ENCODE measurements at regions of chr21 and their contacts with region 1.

Region 1: DNA sequence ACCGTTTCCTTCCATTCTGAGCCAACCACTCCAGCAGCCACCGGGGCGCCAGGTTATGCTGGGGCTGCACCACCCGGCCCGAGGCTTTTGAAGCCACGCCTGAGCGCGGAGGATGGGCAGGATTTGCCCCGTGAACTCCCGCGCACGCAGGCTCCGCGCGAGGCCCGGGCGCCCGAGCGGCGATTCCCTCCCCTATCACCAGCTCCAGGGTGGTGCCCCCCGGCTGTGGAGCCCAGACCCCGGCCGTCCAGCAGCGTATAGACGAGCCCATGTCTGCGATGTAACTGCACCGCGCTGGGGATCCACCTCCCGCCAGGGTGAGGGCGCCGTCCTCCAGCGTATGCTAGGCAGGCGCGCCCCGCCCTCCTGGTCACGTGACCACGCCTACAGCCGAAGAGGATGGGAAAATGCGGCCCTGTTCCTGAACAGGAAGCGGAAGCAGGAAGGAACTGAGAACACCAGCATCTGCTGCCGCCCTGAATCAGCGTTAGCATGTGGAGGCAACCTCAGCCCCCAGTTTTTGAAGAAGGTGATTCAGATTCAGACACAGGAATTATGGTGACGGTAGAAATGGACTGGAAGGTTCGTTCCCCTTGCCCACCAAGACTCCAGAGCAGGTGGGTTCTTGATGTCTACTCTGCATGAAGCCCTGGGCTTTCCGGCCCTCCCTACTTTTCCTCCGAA is 46.0 kb downstream of the VPS26C start:
- DNase-seq: peak; percentile 98
- ATAC-seq: peak; percentile 82
- H3K4me3 Mint-ChIP-seq: peak overlapping the region; percentile 79
- H3K27ac Mint-ChIP-seq: peak overlapping the region; percentile 93
- H3K4me1 Mint-ChIP-seq: peaks cover 53% of the 10 kb centered on the region
- H3K27me3 Mint-ChIP-seq: no peaks in the 10 kb centered on the region
- CTCF ChIP-seq: no peak

Region 2: GRCh38 chr21:37164742-37165141 is 56.4 kb before region 1 on chr21:
- CTCF ChIA-PET with region 1: no interaction called
- POLR2A ChIA-PET with region 1: no interaction called
- intact Hi-C with region 1: no loop called
- DNase-seq: no peak
- ATAC-seq: no peak
- H3K4me3 Mint-ChIP-seq: no peak overlapping the region
- H3K27ac Mint-ChIP-seq: peak overlapping the region; percentile 42
- H3K4me1 Mint-ChIP-seq: no peaks in the 10 kb centered on the region
- H3K27me3 Mint-ChIP-seq: no peaks in the 10 kb centered on the region
- CTCF ChIP-seq: no peak

Region 3: GRCh38 chr21:37176711-37177110 is 44.4 kb before region 1 on chr21:
- CTCF ChIA-PET with region 1: no interaction called
- POLR2A ChIA-PET with region 1: no interaction called
- intact Hi-C with region 1: no loop called
- DNase-seq: no peak
- ATAC-seq: no peak
- H3K4me3 Mint-ChIP-seq: no peak overlapping the region
- H3K27ac Mint-ChIP-seq: no peak overlapping the region
- H3K4me1 Mint-ChIP-seq: no peaks in the 10 kb centered on the region
- H3K27me3 Mint-ChIP-seq: no peaks in the 10 kb centered on the region
- CTCF ChIP-seq: no peak

Region 4: GRCh38 chr21:37267269-37268184 is 46.4 kb after region 1 on chr21 and contains the start of gene VPS26C:
- CTCF ChIA-PET with region 1: interaction called, 4 read pairs
- POLR2A ChIA-PET with region 1: interaction called, 5 read pairs
- intact Hi-C with region 1: loop called (anchors 5 kb)
- DNase-seq: peak; percentile 99
- ATAC-seq: peak; percentile 93
- H3K4me3 Mint-ChIP-seq: peak within 1 kb of the TSS; percentile 90
- H3K27ac Mint-ChIP-seq: peak within 1 kb of the TSS; percentile 98
- H3K4me1 Mint-ChIP-seq: peaks cover 35% of the 10 kb centered on the region
- H3K27me3 Mint-ChIP-seq: no peaks in the 10 kb centered on the region
- CTCF ChIP-seq: no peak
- total RNA-seq, gene VPS26C: 70.9 to 73.4 TPM

Region 5: DNA sequence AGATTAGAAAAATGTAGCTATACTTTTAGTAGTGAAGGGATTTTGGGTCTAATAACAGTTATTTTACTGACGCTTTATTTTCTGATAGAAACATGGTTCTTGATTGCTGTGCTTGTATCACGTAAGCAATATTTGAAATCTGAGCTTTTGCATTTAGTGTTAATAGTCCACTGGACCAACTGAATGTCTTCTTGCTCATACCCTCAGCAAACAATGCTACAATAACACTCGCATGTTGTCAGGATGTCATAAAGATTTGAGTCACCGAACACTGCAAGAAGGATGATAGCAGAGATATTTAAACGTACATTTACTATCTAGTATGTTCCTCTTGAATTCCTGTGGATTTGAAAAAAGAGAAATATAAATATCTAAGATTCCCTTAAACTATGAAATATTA is 152.9 kb after region 1 on chr21:
- CTCF ChIA-PET with region 1: interaction called, 4 read pairs
- POLR2A ChIA-PET with region 1: interaction called, 3 read pairs
- intact Hi-C with region 1: loop called (anchors 2 kb)
- DNase-seq: no peak
- ATAC-seq: no peak
- H3K4me3 Mint-ChIP-seq: no peak overlapping the region
- H3K27ac Mint-ChIP-seq: peak overlapping the region; percentile 73
- H3K4me1 Mint-ChIP-seq: peaks cover 87% of the 10 kb centered on the region
- H3K27me3 Mint-ChIP-seq: no peaks in the 10 kb centered on the region
- CTCF ChIP-seq: no peak

Region 6: DNA sequence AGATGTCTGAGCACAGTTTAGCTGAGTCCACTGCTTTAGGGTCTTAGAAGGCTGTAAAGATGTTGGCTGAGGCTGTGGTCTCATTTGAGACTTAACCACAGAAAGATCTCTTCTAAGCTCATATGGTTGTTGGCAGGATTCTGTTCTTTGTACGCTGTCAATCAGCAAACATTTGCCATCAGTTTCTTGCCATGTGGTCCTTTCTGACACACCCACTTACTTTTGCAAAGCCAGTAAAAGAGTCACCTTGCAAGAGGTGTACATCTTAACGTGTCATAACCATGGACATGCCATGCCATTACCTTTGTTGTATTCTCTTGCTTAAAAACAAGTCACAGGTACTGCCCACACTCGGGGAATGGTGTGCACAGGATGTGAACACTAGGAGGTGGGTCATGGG is 164.1 kb after region 1 on chr21:
- CTCF ChIA-PET with region 1: no interaction called
- POLR2A ChIA-PET with region 1: no interaction called
- intact Hi-C with region 1: no loop called
- DNase-seq: no peak
- ATAC-seq: peak; percentile 53
- H3K4me3 Mint-ChIP-seq: no peak overlapping the region
- H3K27ac Mint-ChIP-seq: no peak overlapping the region
- H3K4me1 Mint-ChIP-seq: peaks cover 79% of the 10 kb centered on the region
- H3K27me3 Mint-ChIP-seq: no peaks in the 10 kb centered on the region
- CTCF ChIP-seq: no peak